OCI-LY7 (cell line): ENCODE measurements at regions of chr2 and their contacts with region 1.

Region 1: GRCh38 chr2:47767880-47768609 is 14.9 kb upstream of the MSH6 start:
- DNase-seq: peak; percentile 75
- H3K4me3 ChIP-seq: no peak overlapping the region
- H3K27ac ChIP-seq: peak overlapping the region; percentile 65
- H3K4me1 ChIP-seq: peaks cover 65% of the 10 kb centered on the region
- CTCF ChIP-seq: peak; percentile 99

Region 2: GRCh38 chr2:47437287-47437686 is 330.8 kb before region 1 on chr2:
- CTCF ChIA-PET with region 1: no interaction called
- POLR2A ChIA-PET with region 1: interaction called, 3 read pairs
- intact Hi-C with region 1: loop called (anchors 2 kb)
- DNase-seq: peak; percentile 50
- H3K4me3 ChIP-seq: no peak overlapping the region
- H3K27ac ChIP-seq: no peak overlapping the region
- H3K4me1 ChIP-seq: peaks cover 4% of the 10 kb centered on the region
- CTCF ChIP-seq: peak; percentile 75

Region 3: DNA sequence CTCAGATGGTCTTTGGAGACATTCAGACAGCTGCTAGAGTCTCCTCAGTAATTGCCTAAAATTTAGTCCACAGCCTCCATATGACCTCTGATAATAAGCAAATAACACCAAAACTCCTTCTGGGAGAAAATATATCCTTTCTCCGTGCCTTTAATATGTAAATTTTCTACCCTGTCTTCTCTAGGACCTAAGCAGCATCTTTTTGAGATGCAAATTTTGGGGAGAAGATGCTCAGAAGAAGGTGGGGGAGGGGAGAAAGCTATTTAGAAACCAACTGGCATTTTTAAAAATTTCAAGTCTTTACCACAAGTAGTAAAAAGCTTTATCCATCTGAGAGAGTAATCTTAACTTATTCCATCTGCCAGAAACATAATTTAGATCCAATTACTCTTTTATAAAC is 105.5 kb before region 1 on chr2:
- CTCF ChIA-PET with region 1: no interaction called
- POLR2A ChIA-PET with region 1: interaction called, 4 read pairs
- intact Hi-C with region 1: loop called (anchors 1 kb)
- DNase-seq: peak; percentile 73
- H3K4me3 ChIP-seq: peak overlapping the region; percentile 55
- H3K27ac ChIP-seq: peak overlapping the region; percentile 84
- H3K4me1 ChIP-seq: peaks cover 77% of the 10 kb centered on the region
- CTCF ChIP-seq: no peak

Region 4: DNA sequence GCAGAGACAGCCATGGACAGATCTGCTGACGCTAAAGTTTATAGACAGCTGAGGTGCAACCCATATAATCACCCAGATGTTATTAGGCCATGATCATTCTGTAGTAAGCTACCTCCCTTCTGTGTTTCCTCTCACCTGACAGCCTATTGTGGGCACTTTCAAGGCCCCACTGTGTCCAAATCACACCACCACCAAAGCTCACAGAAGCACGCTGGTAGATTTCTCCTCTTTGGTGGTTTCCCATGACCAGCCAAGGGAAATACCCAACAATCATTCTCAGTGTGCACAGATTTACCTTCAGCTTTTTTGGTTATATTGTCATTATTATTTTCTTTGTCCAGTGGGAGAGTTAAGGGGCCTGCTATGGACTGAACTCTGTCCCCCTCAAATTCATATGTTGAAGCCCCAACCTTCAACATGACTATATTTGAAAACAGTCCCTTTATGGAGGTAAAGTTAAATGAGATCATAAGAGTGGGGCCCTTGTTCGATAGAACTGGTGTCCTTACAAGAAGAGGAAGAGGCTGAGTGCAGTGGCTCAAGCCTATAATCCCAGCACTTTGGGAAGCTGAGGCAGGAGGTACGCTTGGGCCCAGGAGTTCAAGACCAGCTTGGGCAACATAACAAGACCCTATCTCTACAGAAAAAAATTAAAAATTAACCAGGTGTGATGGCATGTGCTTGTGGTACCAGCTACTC is 59.1 kb before region 1 on chr2:
- CTCF ChIA-PET with region 1: no interaction called
- POLR2A ChIA-PET with region 1: interaction called, 10 read pairs
- intact Hi-C with region 1: no loop called
- DNase-seq: no peak
- H3K4me3 ChIP-seq: no peak overlapping the region
- H3K27ac ChIP-seq: peak overlapping the region; percentile 65
- H3K4me1 ChIP-seq: peaks cover 59% of the 10 kb centered on the region
- CTCF ChIP-seq: no peak

Region 5: GRCh38 chr2:47719099-47719498 is 48.9 kb before region 1 on chr2:
- CTCF ChIA-PET with region 1: interaction called, 4 read pairs
- POLR2A ChIA-PET with region 1: interaction called, 18 read pairs
- intact Hi-C with region 1: loop called (anchors 2 kb)
- DNase-seq: peak; percentile 83
- H3K4me3 ChIP-seq: peak overlapping the region; percentile 33
- H3K27ac ChIP-seq: peak overlapping the region; percentile 100
- H3K4me1 ChIP-seq: peaks cover 100% of the 10 kb centered on the region
- CTCF ChIP-seq: no peak

Region 6: DNA sequence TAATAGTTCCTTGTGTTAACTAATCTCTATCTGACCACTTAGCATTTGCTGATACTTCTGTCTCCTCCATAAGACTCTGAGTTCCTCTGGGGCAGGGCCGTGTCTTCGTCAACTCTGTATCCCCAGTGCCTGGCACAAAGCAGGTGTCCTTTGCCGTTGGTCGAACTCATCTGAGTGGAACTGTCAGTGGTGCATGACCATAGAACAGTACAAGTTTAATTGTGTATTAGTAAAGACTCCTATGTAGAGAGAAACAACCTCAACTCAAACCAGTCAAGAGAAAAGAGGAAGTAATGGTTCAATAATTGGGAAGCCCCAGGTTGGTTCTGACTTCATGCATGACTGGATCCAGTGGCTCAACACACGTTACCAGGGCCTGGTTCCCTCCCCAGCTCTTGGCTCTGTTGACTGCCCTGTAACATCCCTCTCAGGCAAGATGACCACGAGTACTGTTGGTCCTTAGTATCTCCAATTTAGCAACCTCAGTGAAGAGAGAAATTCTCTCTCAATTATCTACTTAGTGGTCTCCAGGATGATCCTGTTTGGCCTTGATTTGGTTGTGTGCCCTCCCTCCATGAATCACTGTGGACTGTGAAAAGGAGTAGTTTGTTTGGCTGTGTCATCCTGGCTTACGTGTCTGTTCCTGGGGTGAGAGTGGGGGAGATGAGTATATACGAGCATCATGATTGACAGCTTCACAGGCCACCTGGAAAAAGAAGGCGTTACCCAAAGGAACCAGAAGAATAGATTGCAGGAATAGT is 43.6 kb before region 1 on chr2:
- CTCF ChIA-PET with region 1: interaction called, 4 read pairs
- POLR2A ChIA-PET with region 1: interaction called, 18 read pairs
- intact Hi-C with region 1: loop called (anchors 2 kb)
- DNase-seq: peak; percentile 99
- H3K4me3 ChIP-seq: peak overlapping the region; percentile 28
- H3K27ac ChIP-seq: peak overlapping the region; percentile 100
- H3K4me1 ChIP-seq: peaks cover 96% of the 10 kb centered on the region
- CTCF ChIP-seq: no peak

Region 7: DNA sequence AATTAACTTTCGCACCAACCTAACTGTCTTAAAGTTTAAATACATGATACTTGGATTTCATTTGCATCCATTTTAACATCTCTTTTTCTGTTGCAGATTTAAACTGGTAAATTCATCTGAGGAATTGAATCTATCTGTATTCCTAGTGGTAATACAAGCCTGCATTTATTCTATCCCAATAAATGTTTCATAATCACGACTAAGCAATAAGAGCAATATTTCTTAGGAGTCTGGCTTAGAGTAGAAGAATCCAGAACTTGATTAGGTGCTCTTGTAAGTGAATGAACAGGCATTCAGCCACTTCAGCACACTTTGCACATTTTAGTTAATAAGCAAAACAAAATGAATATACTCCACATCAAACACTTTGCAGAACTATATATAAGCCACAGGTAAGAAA is 41.9 kb after region 1 on chr2:
- CTCF ChIA-PET with region 1: no interaction called
- POLR2A ChIA-PET with region 1: no interaction called
- intact Hi-C with region 1: no loop called
- DNase-seq: no peak
- H3K4me3 ChIP-seq: no peak overlapping the region
- H3K27ac ChIP-seq: peak overlapping the region; percentile 14
- H3K4me1 ChIP-seq: no peaks in the 10 kb centered on the region
- CTCF ChIP-seq: no peak